CD8-positive, alpha-beta T cell (primary cell): ENCODE measurements at regions of chr1 and their contacts with region 1.

Region 1: DNA sequence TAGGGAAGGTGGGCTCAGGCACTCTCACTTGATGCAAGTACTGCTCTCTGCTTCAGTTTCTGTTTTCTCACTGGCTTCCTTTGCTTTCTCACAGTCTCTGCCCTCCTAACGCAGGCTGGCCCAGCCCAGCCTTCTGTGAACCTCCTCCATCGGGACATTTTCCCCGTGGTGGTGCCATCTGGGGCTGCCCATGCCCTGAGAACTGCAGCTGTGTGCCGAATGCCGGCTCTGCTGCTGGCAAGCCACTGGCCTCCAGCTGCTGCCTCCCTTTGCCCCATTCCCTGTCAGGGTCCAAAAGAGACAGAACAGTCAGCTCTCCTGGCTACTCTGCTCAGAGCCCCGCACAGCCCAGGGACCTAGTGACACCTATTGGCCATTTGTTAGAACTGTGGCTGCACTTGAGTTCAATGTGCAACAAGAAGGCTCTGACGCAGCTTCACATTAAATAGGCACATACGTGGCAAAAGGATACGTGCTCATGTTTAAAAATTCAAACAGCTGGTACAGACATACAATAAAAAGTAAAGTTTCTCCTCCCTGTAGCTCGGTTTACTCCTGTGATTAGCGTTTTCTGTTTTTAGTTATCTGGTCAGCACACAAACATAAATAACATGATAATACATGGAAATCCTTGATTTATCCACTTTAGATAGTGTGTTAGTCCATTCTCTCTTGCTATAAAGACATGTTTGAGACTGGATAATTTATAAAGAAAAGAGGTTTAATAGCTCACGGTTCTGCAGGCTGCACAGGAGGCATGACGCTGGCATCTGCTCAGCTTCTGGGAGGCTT is 46.6 kb downstream of the FCRL5 start:
- DNase-seq: peak in 4 of 9 experiments; percentile 14 to 44 (median 31)
- ATAC-seq: peak; percentile 55
- H3K4me3 ChIP-seq: no peak overlapping the region
- H3K4me3 Mint-ChIP-seq: no peak overlapping the region
- H3K27ac ChIP-seq: no peak overlapping the region
- H3K27ac Mint-ChIP-seq: no peak overlapping the region
- H3K4me1 ChIP-seq: no peaks in the 10 kb centered on the region
- H3K4me1 Mint-ChIP-seq: no peaks in the 10 kb centered on the region
- H3K27me3 ChIP-seq: no peaks in the 10 kb centered on the region
- H3K27me3 Mint-ChIP-seq: peaks cover 6% of the 10 kb centered on the region
- CTCF ChIP-seq: peak; percentile 41

Region 2: DNA sequence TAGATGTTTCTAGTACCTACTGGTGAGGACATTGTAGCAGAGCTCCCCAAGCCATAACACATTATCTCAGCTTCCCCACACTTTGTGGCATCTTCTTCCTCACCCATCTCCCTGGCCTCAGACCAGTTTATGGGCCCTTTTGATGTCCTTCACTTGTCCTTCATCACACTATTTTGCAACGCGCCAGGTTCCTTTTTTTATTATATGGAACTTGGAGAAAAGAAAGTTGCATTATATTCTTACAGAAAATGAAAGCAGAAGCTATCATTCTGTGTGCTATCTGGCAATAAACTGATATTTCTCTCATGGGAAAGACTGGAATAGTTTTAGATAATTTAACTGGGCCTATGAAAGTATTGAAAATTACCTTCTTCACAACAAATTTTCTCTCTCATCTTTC is 170.6 kb before region 1 on chr1:
- CTCF ChIA-PET with region 1: no interaction called
- POLR2A ChIA-PET with region 1: no interaction called
- intact Hi-C with region 1: no loop called
- DNase-seq: no peak
- ATAC-seq: no peak
- H3K4me3 ChIP-seq: no peak overlapping the region
- H3K4me3 Mint-ChIP-seq: no peak overlapping the region
- H3K27ac ChIP-seq: no peak overlapping the region
- H3K27ac Mint-ChIP-seq: no peak overlapping the region
- H3K4me1 ChIP-seq: no peaks in the 10 kb centered on the region
- H3K4me1 Mint-ChIP-seq: no peaks in the 10 kb centered on the region
- H3K27me3 ChIP-seq: no peaks in the 10 kb centered on the region
- H3K27me3 Mint-ChIP-seq: peaks cover 21% of the 10 kb centered on the region
- CTCF ChIP-seq: no peak

Region 3: GRCh38 chr1:157517016-157517415 is 11.3 kb after region 1 on chr1:
- CTCF ChIA-PET with region 1: no interaction called
- POLR2A ChIA-PET with region 1: no interaction called
- intact Hi-C with region 1: loop called in 1 of 2 experiments (anchors 1 kb)
- DNase-seq: no peak
- ATAC-seq: no peak
- H3K4me3 ChIP-seq: no peak overlapping the region
- H3K4me3 Mint-ChIP-seq: no peak overlapping the region
- H3K27ac ChIP-seq: no peak overlapping the region
- H3K27ac Mint-ChIP-seq: no peak overlapping the region
- H3K4me1 ChIP-seq: no peaks in the 10 kb centered on the region
- H3K4me1 Mint-ChIP-seq: peaks cover under 1% of the 10 kb centered on the region
- H3K27me3 ChIP-seq: no peaks in the 10 kb centered on the region
- H3K27me3 Mint-ChIP-seq: peaks cover 2% of the 10 kb centered on the region
- CTCF ChIP-seq: no peak